Activated naive CD4-positive, alpha-beta T cell treated with anti-CD3 and anti-CD28 coated beads for 36 hours (primary cell): ENCODE measurements at regions of chr14 and their contacts with region 1.

Region 1: DNA sequence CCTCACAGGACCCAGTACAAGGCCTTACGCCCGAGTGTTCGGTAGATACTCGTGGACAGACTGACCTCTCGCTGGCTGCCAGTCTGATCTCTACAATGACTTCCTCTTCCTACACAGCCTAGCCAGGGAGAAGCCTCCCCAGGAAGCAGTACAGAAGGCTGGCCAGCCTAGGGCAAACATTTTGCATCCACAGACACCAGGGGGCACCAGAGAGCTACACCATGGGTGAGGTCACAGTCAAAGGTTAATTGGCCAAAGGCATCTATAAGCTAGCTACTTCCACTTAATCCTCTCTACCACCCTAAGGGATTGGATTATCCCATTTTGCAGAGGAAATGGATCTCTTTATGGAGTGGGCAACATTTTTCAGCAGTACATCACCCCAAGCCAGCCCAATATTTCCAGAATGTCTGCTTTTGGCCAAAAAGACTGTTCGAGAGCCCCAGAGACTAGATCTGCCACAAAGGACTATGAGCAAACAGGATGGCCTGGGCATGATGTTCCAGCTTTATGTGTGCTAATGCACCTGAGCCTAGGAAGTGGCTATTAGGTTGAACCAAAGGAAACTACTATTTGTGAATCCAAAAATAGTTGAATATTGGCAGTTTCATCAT is 14.6 kb upstream of the PNMA1 start:
- DNase-seq: peak; percentile 94
- H3K4me3 Mint-ChIP-seq: no peak overlapping the region
- H3K27ac Mint-ChIP-seq: peak overlapping the region; percentile 74
- H3K4me1 Mint-ChIP-seq: peaks cover 24% of the 10 kb centered on the region
- H3K27me3 Mint-ChIP-seq: no peaks in the 10 kb centered on the region

Region 2: GRCh38 chr14:73741386-73741875 is 12.6 kb after region 1 on chr14:
- CTCF ChIA-PET with region 1: interaction called, 80 read pairs
- intact Hi-C with region 1: loop called (anchors 2 kb)
- DNase-seq: peak; percentile 88
- H3K4me3 Mint-ChIP-seq: peak overlapping the region; percentile 43
- H3K27ac Mint-ChIP-seq: peak overlapping the region; percentile 84
- H3K4me1 Mint-ChIP-seq: peaks cover 63% of the 10 kb centered on the region
- H3K27me3 Mint-ChIP-seq: no peaks in the 10 kb centered on the region

Region 3: GRCh38 chr14:73771848-73772638 is 43.2 kb after region 1 on chr14:
- CTCF ChIA-PET with region 1: interaction called, 27 read pairs
- intact Hi-C with region 1: loop called (anchors 1 kb)
- DNase-seq: peak; percentile 92
- H3K4me3 Mint-ChIP-seq: peak overlapping the region; percentile 56
- H3K27ac Mint-ChIP-seq: peak overlapping the region; percentile 80
- H3K4me1 Mint-ChIP-seq: peaks cover 66% of the 10 kb centered on the region
- H3K27me3 Mint-ChIP-seq: no peaks in the 10 kb centered on the region

Region 4: DNA sequence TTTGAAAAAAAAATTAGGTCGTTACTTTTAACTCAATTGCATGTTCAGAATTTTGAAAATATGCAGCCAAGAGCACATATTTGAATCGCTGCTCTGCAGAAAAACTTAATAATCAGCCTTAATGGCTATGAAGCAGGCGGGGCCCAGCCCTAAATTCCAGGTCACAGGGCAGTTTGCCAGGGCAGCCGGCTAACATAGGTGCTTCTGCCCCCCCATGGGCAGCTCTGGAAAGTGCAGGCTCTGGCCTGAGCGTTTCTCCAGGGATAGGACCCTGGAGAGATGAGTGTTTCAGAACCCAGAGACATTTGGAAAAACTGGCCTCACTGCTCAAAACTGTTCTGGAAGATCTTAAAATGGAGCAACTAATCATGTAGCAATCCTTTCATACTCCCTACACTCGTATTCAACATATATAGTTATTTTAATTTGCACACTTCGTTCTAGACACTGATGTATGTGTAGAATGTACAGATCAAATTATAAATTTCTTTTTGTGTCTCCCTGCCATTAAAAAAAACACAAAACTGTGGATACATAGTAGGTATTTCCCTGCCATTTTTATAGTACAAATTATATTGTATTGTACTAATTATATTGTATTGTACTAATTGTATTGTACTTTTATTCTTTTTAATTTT is 96.8 kb after region 1 on chr14:
- CTCF ChIA-PET with region 1: interaction called, 126 read pairs
- intact Hi-C with region 1: loop called (anchors 1 kb)
- DNase-seq: peak; percentile 90
- H3K4me3 Mint-ChIP-seq: no peak overlapping the region
- H3K27ac Mint-ChIP-seq: no peak overlapping the region
- H3K4me1 Mint-ChIP-seq: peaks cover 14% of the 10 kb centered on the region
- H3K27me3 Mint-ChIP-seq: no peaks in the 10 kb centered on the region

Region 5: DNA sequence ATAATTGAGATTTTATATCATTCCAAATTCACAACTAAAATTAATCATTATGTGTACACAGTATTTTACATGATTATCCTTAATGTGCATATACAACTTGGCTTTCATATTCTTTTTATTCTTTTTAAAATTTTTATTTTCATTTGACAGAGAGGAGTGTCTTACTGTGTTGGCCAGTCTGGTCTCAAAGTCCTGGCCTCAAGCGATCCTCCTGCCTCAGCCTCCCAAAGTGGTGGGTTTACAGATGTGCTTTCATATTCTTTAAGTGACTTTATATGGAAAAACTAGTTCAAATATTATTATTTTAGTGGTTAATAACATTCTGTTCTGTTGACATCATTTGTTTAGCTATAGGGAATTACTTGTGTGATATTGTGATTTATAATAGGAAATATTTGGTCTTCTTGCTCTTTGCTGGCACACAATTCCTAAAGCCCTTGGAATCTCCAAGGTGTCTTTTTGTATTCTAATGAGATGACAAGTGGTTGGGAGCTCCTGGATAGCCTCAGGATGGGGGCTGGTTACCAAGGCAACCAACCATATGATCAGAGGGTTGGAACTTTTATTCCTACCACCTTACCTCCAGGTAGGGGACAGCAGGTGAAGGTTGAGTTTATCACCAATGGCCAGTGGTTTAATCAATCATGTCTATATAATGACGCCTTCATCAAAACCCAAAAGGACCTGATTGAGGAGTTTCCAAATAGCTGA is 141.9 kb after region 1 on chr14:
- CTCF ChIA-PET with region 1: interaction called, 7 read pairs
- intact Hi-C with region 1: loop called (anchors 1 kb)
- DNase-seq: no peak
- H3K4me3 Mint-ChIP-seq: no peak overlapping the region
- H3K27ac Mint-ChIP-seq: no peak overlapping the region
- H3K4me1 Mint-ChIP-seq: no peaks in the 10 kb centered on the region
- H3K27me3 Mint-ChIP-seq: no peaks in the 10 kb centered on the region